Ascending aorta (tissue), 2 donors: ENCODE measurements at regions of chr17 and their contacts with region 1.

Region 1: GRCh38 chr17:31558748-31559644 is 167.5 kb downstream of the RAB11FIP4 start:
- DNase-seq: peak in 1 of 2 donors; percentile 88
- H3K4me3 ChIP-seq: peak overlapping the region; percentile 75 to 91
- H3K27ac ChIP-seq: peak overlapping the region; percentile 93 to 98
- H3K4me1 ChIP-seq: peaks cover 3 to 23% of the 10 kb centered on the region in 2 donors
- H3K27me3 ChIP-seq: no peaks in the 10 kb centered on the region
- CTCF ChIP-seq: peak; percentile 40 to 98 (median 62)

Region 2: GRCh38 chr17:31416503-31416923 is 142.5 kb before region 1 on chr17:
- intact Hi-C with region 1: no loop called
- DNase-seq: no peak
- H3K4me3 ChIP-seq: no peak overlapping the region
- H3K27ac ChIP-seq: no peak overlapping the region
- H3K4me1 ChIP-seq: no peaks in the 10 kb centered on the region
- H3K27me3 ChIP-seq: no peaks in the 10 kb centered on the region
- CTCF ChIP-seq: no peak

Region 3: GRCh38 chr17:31541559-31541958 is 17.4 kb before region 1 on chr17:
- intact Hi-C with region 1: no loop called
- DNase-seq: no peak
- H3K4me3 ChIP-seq: no peak overlapping the region
- H3K27ac ChIP-seq: no peak overlapping the region
- H3K4me1 ChIP-seq: peaks cover 0 to 9% of the 10 kb centered on the region in 2 donors
- H3K27me3 ChIP-seq: no peaks in the 10 kb centered on the region
- CTCF ChIP-seq: no peak

Region 4: GRCh38 chr17:31581022-31581490 is 22.1 kb after region 1 on chr17:
- intact Hi-C with region 1: loop called (anchors 2 kb)
- DNase-seq: peak in 1 of 2 donors; percentile 90
- H3K4me3 ChIP-seq: peak overlapping the region in 1 of 2 donors; percentile 52
- H3K27ac ChIP-seq: peak overlapping the region; percentile 89
- H3K4me1 ChIP-seq: peaks cover 22 to 48% of the 10 kb centered on the region in 2 donors
- H3K27me3 ChIP-seq: no peaks in the 10 kb centered on the region
- CTCF ChIP-seq: no peak

Region 5: DNA sequence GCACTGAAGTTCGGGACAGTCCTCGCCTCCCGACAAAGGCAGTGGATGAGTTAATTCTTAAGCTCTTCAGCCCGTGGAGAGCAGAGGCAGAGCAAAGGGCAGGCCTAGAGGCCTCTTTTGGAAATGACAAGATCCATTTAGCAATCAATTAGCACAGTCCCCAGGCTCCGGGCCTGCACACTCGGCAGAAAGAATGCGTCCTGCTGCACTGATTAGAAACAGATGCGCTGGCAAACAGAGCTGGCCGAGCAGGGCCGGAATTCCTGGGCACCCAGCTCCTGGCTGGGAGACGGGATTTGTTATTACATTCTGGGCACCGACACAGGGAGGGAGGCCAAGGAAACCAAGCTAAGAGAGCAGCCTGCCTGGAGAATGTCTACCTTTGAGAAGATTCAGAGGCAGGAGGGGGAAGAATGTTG is 137.2 kb after region 1 on chr17:
- intact Hi-C with region 1: loop called (anchors 2 kb)
- DNase-seq: peak; percentile 58 to 96
- H3K4me3 ChIP-seq: no peak overlapping the region
- H3K27ac ChIP-seq: peak overlapping the region; percentile 71 to 73
- H3K4me1 ChIP-seq: peaks cover 6 to 45% of the 10 kb centered on the region in 2 donors
- H3K27me3 ChIP-seq: no peaks in the 10 kb centered on the region
- CTCF ChIP-seq: peak in 1 of 3 experiments; percentile 18

Region 6: GRCh38 chr17:31858642-31859473 is 299.9 kb after region 1 on chr17 and contains the start of gene COPRS:
- intact Hi-C with region 1: loop called (anchors 1 kb)
- DNase-seq: peak; percentile 53 to 93
- H3K4me3 ChIP-seq: peak within 1 kb of the TSS; percentile 91 to 97
- H3K27ac ChIP-seq: peak within 1 kb of the TSS; percentile 70 to 92
- H3K4me1 ChIP-seq: peaks cover 8 to 17% of the 10 kb centered on the region in 2 donors
- H3K27me3 ChIP-seq: no peaks in the 10 kb centered on the region
- CTCF ChIP-seq: peak in 1 of 3 experiments; percentile 47
- total RNA-seq, gene COPRS: 92.1 TPM